ENCODE measurements at regions of chr6 and their contacts with region 1.

Region 1: DNA sequence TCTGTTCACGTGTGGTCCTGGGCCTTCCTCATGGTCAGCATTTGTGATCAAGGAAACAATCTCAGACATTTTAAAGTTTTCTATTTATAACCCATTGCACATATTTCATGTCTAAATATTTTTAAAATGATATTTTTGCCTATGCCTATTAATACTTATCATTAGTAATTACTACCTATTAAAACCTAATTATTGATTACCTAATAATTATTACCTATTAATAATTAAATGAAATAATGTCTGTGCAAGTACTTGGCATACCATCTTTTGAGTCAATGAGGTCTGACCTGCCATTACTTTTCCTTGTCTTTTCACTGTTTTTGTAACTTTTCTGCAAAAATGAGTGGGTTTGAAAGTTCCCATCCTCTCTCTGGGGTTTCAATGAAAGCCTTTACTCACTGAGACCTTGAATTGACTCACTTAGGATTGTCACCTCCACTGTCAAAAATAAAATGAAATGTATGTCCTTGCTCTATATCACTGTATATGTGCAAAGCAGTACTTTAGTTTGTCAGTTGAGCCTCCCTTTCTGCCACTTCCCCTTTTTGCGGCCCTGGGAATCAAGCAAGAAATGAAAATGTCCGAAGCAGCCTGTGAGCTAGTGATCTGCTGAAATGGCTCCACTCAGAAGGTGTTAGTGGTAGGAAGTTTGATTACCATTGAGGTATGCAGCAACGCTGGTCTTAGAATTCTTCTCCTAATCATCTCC is 87.8 kb downstream of the L3MBTL3 start:
- DNase-seq: no peak
- H3K4me3 ChIP-seq: no peak overlapping the region
- H3K27ac ChIP-seq: no peak overlapping the region
- H3K4me1 ChIP-seq: no peaks in the 10 kb centered on the region
- H3K27me3 ChIP-seq: no peaks in the 10 kb centered on the region
- CTCF ChIP-seq: no peak
- POLR2A ChIP-seq: no peak

Region 2: GRCh38 chr6:130057495-130057894 is 48.7 kb before region 1 on chr6:
- intact Hi-C with region 1: loop called (anchors 2 kb)
- DNase-seq: no peak
- H3K4me3 ChIP-seq: no peak overlapping the region
- H3K27ac ChIP-seq: no peak overlapping the region
- H3K4me1 ChIP-seq: no peaks in the 10 kb centered on the region
- H3K27me3 ChIP-seq: no peaks in the 10 kb centered on the region
- CTCF ChIP-seq: no peak
- POLR2A ChIP-seq: no peak

Measured in breast epithelium (tissue), 4 donors.